Prostate gland (tissue), 2 donors: ENCODE measurements at regions of chr3 and their contacts with region 1.

Region 1: GRCh38 chr3:64484289-64484992 is 203.4 kb downstream of the ADAMTS9 start:
- DNase-seq: peak; percentile 77
- H3K4me3 ChIP-seq: no peak overlapping the region
- H3K27ac ChIP-seq: no peak overlapping the region
- H3K4me1 ChIP-seq: no peaks in the 10 kb centered on the region
- H3K27me3 ChIP-seq: no peaks in the 10 kb centered on the region
- CTCF ChIP-seq: peak; percentile 47 to 92 (median 84)
- POLR2A ChIP-seq: no peak

Region 2: GRCh38 chr3:64209866-64210621 is 274.4 kb before region 1 on chr3:
- intact Hi-C with region 1: loop called (anchors 10 kb)
- DNase-seq: peak; percentile 68
- H3K4me3 ChIP-seq: no peak overlapping the region
- H3K27ac ChIP-seq: peak overlapping the region; percentile 51 to 64
- H3K4me1 ChIP-seq: no peaks in the 10 kb centered on the region
- H3K27me3 ChIP-seq: no peaks in the 10 kb centered on the region
- CTCF ChIP-seq: no peak
- POLR2A ChIP-seq: no peak

Region 3: DNA sequence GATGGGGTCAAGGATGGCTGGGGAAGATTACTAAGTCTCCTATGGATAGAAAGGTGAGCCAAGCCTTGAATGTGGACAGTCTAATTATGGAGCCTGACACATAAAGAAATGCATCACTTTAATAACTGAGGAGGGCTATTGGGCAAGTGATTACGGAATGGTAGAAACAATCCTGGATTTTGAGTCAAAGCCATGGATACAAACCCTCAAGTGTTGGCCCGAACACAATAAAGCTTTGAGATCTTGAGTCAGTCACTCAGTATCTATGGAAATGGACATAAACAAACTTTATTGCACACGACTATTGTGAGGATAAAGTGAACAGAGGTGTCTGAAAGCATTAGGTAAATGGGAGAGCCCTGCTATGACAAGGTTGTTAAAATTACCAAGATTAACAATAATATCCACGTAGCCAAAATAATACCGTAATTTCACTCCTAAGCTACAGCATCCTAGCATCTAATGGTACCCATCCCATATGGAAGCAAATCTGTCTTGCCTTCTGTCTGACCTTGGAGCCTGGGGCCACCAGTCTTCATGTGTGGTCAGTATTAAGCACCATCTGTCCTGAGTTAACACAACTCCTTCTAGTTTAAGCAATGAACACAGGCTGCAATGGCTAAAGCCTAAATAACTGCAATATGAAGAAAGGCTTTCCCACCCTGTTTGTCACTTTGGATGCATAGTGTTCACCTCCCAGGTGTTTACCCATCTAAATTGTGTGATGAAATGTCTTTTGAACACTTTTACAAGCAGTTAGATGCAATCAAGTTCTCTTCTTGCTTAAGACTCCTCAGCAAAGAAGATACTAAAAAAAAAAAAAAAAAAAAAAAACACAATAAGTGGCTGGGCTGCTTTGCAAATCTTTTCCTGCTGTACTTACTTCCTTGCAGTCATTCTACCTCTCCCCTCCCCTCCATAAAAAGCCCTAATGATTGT is 122.2 kb before region 1 on chr3:
- intact Hi-C with region 1: no loop called
- DNase-seq: no peak
- H3K4me3 ChIP-seq: no peak overlapping the region
- H3K27ac ChIP-seq: no peak overlapping the region
- H3K4me1 ChIP-seq: no peaks in the 10 kb centered on the region
- H3K27me3 ChIP-seq: no peaks in the 10 kb centered on the region
- CTCF ChIP-seq: no peak
- POLR2A ChIP-seq: no peak

Region 4: GRCh38 chr3:64530149-64531049 is 46.0 kb after region 1 on chr3:
- intact Hi-C with region 1: no loop called
- DNase-seq: peak; percentile 65
- H3K4me3 ChIP-seq: no peak overlapping the region
- H3K27ac ChIP-seq: no peak overlapping the region
- H3K4me1 ChIP-seq: no peaks in the 10 kb centered on the region
- H3K27me3 ChIP-seq: no peaks in the 10 kb centered on the region
- CTCF ChIP-seq: peak; percentile 60 to 86 (median 66)
- POLR2A ChIP-seq: no peak

Region 5: DNA sequence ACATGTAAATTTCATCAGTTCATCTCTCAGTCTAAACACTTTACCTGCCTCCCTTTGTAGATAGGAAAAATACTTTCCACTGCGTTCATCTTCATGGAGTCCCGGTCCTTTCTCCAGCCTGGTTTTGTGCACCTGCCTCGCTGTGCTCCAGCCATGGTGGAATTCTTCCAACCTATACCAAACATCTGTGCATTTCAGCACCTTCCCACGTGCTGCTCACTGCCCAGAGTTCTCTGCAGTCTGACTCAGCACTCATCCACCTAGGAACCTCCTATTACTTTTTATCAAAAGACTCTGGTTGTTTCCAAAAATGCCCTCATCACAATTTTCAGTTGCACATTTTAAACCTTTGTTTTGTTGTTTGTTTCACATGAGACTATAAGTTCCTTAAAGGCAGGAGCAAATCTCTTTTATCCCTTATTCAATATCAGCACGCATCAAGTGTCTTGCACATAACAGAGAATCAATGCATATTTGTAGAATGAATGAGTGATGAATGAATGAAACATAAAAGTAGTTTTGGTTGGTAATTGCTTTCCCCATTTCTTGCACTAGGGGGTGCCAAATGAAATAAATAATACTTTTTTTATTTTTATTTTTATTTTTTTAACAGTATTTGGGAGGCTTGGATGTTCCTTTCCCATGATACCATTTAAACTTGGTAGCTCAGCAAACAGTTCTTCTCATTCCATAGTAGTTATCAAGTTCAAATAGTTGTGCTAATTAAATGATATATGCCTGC is 233.6 kb after region 1 on chr3:
- intact Hi-C with region 1: no loop called
- DNase-seq: no peak
- H3K4me3 ChIP-seq: no peak overlapping the region
- H3K27ac ChIP-seq: no peak overlapping the region
- H3K4me1 ChIP-seq: no peaks in the 10 kb centered on the region
- H3K27me3 ChIP-seq: no peaks in the 10 kb centered on the region
- CTCF ChIP-seq: peak in 3 of 4 experiments; percentile 18 to 32 (median 21)
- POLR2A ChIP-seq: no peak